ENCODE measurements at regions of chr6 and their contacts with region 1.

Region 1: GRCh38 chr6:15962449-15962764 is 166.5 kb upstream of the MYLIP start:
- DNase-seq: peak; percentile 68
- H3K4me3 ChIP-seq: no peak overlapping the region
- H3K27ac ChIP-seq: peak overlapping the region; percentile 42
- H3K4me1 ChIP-seq: peaks cover 17% of the 10 kb centered on the region
- H3K27me3 ChIP-seq: no peaks in the 10 kb centered on the region
- CTCF ChIP-seq: no peak

Region 2: DNA sequence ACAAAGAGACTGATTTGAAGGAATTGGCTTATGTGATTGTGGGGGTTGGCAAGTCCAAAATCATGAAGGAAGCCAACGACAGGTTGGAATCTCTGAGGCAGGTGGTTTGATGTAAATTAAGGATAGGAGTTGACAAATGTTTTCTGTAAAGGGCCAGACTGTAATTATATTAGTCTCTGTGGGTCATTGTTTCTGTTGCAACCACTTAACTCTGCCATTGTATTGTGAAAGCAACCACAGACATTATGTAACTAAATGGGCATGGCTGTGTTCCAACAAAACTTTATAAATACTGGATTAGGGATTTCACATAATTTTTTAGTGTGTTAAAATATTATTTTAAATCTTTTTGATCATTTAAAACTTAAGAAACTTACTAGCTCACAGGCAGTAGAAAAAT is 32.7 kb before region 1 on chr6:
- CTCF ChIA-PET with region 1: no interaction called
- dilution Hi-C with region 1: loop called (anchors 5 kb)
- in situ Hi-C with region 1: no loop called
- intact Hi-C with region 1: no loop called
- DNase-seq: peak; percentile 54
- H3K4me3 ChIP-seq: no peak overlapping the region
- H3K27ac ChIP-seq: no peak overlapping the region
- H3K4me1 ChIP-seq: no peaks in the 10 kb centered on the region
- H3K27me3 ChIP-seq: no peaks in the 10 kb centered on the region
- CTCF ChIP-seq: no peak